A673 (cell line): ENCODE measurements at regions of chr1 and their contacts with region 1.

Region 1: DNA sequence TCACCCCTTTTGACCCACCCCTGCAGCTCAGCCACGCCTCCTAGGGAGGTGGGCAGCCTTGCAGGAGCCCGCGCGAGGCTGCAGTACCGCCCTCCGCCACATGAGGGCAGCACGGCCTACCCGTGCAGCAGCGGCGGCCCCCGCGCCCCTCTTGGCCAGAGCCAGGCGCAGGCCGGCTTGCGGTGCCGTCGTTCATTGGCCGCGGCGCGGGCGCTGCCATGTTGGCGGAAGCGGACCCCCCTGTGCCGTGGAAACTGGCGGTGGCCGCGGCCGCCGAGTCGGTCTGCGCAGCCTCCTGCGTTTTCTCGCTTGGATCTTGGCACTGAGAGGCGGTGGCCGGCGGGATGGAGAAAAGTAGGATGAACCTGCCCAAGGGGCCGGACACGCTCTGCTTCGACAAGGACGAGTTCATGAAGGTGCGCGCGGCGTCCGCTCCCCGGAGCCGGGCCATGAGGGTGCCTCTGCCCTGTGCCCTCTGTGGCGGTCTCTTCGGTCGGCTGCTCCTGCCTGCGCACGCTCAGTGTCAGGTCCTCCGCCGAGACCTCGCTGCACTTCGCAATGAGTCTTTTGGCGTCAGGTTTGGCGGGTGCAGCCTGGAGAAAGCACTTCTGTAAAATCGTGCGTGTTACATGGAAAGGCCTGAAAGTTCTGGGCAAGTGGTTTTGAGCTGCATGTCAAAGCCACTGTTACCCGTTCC is at the start of gene COG2:
- DNase-seq: peak; percentile 96
- H3K4me3 ChIP-seq: peak within 1 kb of the TSS; percentile 89
- H3K27ac ChIP-seq: peak within 1 kb of the TSS; percentile 73
- H3K4me1 ChIP-seq: peaks cover 3% of the 10 kb centered on the region
- H3K27me3 ChIP-seq: peaks cover 24% of the 10 kb centered on the region
- CTCF ChIP-seq: peak; percentile 98
- total RNA-seq, gene COG2: 20.3 and 26.6 TPM in 2 replicates

Region 2: DNA sequence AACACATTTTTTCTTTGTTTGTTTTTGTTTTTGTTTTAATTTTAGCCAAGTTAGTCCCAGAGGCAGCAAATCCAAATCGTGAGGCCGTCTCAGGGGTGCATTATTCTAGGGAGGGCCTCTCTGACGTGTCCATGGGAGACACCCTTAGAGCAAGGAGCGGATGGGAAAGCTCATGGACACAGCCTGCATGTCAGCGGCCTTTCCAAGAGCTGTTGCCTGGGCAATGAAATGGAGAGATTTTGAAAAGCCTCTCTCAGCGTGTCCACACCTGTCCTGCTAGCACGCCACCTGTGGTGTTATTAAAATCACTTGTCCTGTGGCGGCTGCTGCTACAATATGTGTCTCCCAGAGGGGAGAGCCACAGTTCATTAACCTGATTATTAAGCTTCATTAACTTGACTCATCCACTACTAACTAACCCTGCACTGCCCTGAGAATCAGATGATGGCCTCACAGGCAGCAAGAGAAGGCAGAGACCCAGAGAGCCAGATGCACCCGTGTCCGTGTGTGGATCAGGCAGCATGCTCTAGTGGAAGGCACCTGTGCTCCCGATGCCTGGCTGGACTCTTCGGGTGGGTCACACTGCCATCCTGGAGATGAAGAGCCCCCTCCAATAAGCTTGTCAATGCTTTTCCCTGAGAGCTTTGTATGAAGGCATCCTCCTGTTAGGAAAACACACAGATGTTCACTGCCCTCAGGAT is 349.6 kb before region 1 on chr1:
- CTCF ChIA-PET with region 1: no interaction called
- POLR2A ChIA-PET with region 1: no interaction called
- intact Hi-C with region 1: no loop called
- DNase-seq: no peak
- H3K4me3 ChIP-seq: no peak overlapping the region
- H3K27ac ChIP-seq: no peak overlapping the region
- H3K4me1 ChIP-seq: no peaks in the 10 kb centered on the region
- H3K27me3 ChIP-seq: no peaks in the 10 kb centered on the region
- CTCF ChIP-seq: no peak

Region 3: GRCh38 chr1:230772457-230773395 is 130.3 kb after region 1 on chr1:
- CTCF ChIA-PET with region 1: interaction called, 4 read pairs
- POLR2A ChIA-PET with region 1: no interaction called
- intact Hi-C with region 1: loop called (anchors 5 kb)
- DNase-seq: peak; percentile 69
- H3K4me3 ChIP-seq: no peak overlapping the region
- H3K27ac ChIP-seq: no peak overlapping the region
- H3K4me1 ChIP-seq: no peaks in the 10 kb centered on the region
- H3K27me3 ChIP-seq: peaks cover 9% of the 10 kb centered on the region
- CTCF ChIP-seq: peak; percentile 59

Region 4: DNA sequence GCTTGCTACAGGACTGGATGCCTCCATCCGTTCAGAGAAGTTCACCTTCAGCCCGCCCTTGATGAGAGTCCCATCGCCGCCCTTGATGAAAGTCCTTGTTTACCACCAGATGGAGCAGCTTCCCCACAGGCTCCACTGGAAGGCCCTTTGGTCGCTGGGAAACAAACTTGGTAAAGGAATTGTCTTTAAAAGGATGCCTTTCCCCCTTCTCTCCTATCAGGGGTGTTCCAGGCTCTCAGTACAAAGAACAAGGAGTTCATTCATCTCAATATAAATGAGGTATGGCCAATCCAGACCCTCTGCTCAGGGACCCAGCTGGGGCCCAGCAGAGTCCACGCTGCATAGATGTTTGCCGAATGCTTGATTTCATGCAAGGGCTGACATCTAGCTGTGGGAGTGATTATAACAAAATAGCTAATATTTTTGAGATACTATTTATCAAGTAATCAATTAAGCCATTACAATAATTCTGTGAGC is 155.6 kb after region 1 on chr1:
- CTCF ChIA-PET with region 1: no interaction called
- POLR2A ChIA-PET with region 1: no interaction called
- intact Hi-C with region 1: no loop called
- DNase-seq: peak; percentile 66
- H3K4me3 ChIP-seq: no peak overlapping the region
- H3K27ac ChIP-seq: no peak overlapping the region
- H3K4me1 ChIP-seq: no peaks in the 10 kb centered on the region
- H3K27me3 ChIP-seq: no peaks in the 10 kb centered on the region
- CTCF ChIP-seq: peak; percentile 70

Region 5: GRCh38 chr1:231040019-231040799 is 397.8 kb after region 1 on chr1 and contains the start of gene FAM89A:
- CTCF ChIA-PET with region 1: no interaction called
- POLR2A ChIA-PET with region 1: no interaction called
- intact Hi-C with region 1: no loop called
- DNase-seq: peak; percentile 66
- H3K4me3 ChIP-seq: peak within 1 kb of the TSS; percentile 83
- H3K27ac ChIP-seq: peak within 1 kb of the TSS; percentile 49
- H3K4me1 ChIP-seq: peaks cover 11% of the 10 kb centered on the region
- H3K27me3 ChIP-seq: peaks cover 15% of the 10 kb centered on the region
- CTCF ChIP-seq: no peak
- total RNA-seq, gene FAM89A: 9.9 and 12.1 TPM in 2 replicates